CD4-positive, alpha-beta T cell (primary cell): ENCODE measurements at regions of chrX and their contacts with region 1.

Region 1: DNA sequence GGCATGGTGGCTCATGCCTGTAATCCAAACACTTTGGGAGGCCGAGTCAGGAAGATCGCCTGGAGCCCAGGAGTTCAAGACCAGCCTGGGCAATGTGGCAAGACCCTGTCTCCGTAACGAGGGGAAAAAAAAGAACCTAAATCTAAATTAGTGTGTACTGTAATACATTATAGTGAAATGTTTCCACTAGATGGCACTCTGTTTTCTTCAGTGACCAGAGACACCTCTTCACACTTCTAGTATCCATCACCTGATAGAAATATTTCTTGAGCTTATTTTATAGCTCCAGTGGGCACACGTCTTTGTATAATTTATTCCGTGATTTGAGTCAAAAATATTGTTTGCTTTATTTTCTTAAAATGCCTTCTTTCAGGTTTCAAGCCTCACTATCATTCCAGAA is 600.9 kb upstream of the DIPK2B start:
- DNase-seq: peak in 3 of 14 experiments; percentile 59 to 66 (median 64)
- ATAC-seq: peak; percentile 50
- H3K4me3 ChIP-seq: peak overlapping the region; percentile 38
- H3K4me3 Mint-ChIP-seq: peak overlapping the region; percentile 72
- H3K27ac ChIP-seq: no peak overlapping the region
- H3K27ac Mint-ChIP-seq: peak overlapping the region; percentile 83
- H3K4me1 ChIP-seq: peaks cover 28% of the 10 kb centered on the region
- H3K4me1 Mint-ChIP-seq: peaks cover 57% of the 10 kb centered on the region
- H3K27me3 ChIP-seq: no peaks in the 10 kb centered on the region
- H3K27me3 Mint-ChIP-seq: no peaks in the 10 kb centered on the region
- CTCF ChIP-seq: peak; percentile 44

Region 2: GRCh38 chrX:45769761-45770582 is 31.6 kb before region 1 on chrX:
- CTCF ChIA-PET with region 1: interaction called, 6 read pairs
- POLR2A ChIA-PET with region 1: interaction called, 37 read pairs
- intact Hi-C with region 1: loop called in 1 of 2 experiments (anchors 1 kb)
- DNase-seq: peak in 7 of 14 experiments; percentile 6 to 78 (median 18)
- ATAC-seq: peak; percentile 25
- H3K4me3 ChIP-seq: peak overlapping the region; percentile 64
- H3K4me3 Mint-ChIP-seq: peak overlapping the region; percentile 93
- H3K27ac ChIP-seq: peak overlapping the region; percentile 63 to 71
- H3K27ac Mint-ChIP-seq: peak overlapping the region; percentile 97
- H3K4me1 ChIP-seq: peaks cover 32% of the 10 kb centered on the region
- H3K4me1 Mint-ChIP-seq: peaks cover 89% of the 10 kb centered on the region
- H3K27me3 ChIP-seq: no peaks in the 10 kb centered on the region
- H3K27me3 Mint-ChIP-seq: no peaks in the 10 kb centered on the region
- CTCF ChIP-seq: no peak

Region 3: GRCh38 chrX:45843518-45843917 is 42.0 kb after region 1 on chrX:
- CTCF ChIA-PET with region 1: interaction called, 5 read pairs
- POLR2A ChIA-PET with region 1: interaction called, 16 read pairs
- intact Hi-C with region 1: loop called (anchors 2 to 5 kb)
- DNase-seq: peak in 5 of 14 experiments; percentile 6 to 55 (median 45)
- ATAC-seq: peak; percentile 63
- H3K4me3 ChIP-seq: no peak overlapping the region
- H3K4me3 Mint-ChIP-seq: no peak overlapping the region
- H3K27ac ChIP-seq: no peak overlapping the region
- H3K27ac Mint-ChIP-seq: no peak overlapping the region
- H3K4me1 ChIP-seq: peaks cover 8% of the 10 kb centered on the region
- H3K4me1 Mint-ChIP-seq: peaks cover 24% of the 10 kb centered on the region
- H3K27me3 ChIP-seq: no peaks in the 10 kb centered on the region
- H3K27me3 Mint-ChIP-seq: no peaks in the 10 kb centered on the region
- CTCF ChIP-seq: peak; percentile 37

Region 4: GRCh38 chrX:45868425-45868824 is 66.9 kb after region 1 on chrX:
- CTCF ChIA-PET with region 1: no interaction called
- POLR2A ChIA-PET with region 1: no interaction called
- intact Hi-C with region 1: no loop called
- DNase-seq: no peak
- ATAC-seq: no peak
- H3K4me3 ChIP-seq: no peak overlapping the region
- H3K4me3 Mint-ChIP-seq: no peak overlapping the region
- H3K27ac ChIP-seq: no peak overlapping the region
- H3K27ac Mint-ChIP-seq: no peak overlapping the region
- H3K4me1 ChIP-seq: no peaks in the 10 kb centered on the region
- H3K4me1 Mint-ChIP-seq: no peaks in the 10 kb centered on the region
- H3K27me3 ChIP-seq: no peaks in the 10 kb centered on the region
- H3K27me3 Mint-ChIP-seq: no peaks in the 10 kb centered on the region
- CTCF ChIP-seq: no peak

Region 5: DNA sequence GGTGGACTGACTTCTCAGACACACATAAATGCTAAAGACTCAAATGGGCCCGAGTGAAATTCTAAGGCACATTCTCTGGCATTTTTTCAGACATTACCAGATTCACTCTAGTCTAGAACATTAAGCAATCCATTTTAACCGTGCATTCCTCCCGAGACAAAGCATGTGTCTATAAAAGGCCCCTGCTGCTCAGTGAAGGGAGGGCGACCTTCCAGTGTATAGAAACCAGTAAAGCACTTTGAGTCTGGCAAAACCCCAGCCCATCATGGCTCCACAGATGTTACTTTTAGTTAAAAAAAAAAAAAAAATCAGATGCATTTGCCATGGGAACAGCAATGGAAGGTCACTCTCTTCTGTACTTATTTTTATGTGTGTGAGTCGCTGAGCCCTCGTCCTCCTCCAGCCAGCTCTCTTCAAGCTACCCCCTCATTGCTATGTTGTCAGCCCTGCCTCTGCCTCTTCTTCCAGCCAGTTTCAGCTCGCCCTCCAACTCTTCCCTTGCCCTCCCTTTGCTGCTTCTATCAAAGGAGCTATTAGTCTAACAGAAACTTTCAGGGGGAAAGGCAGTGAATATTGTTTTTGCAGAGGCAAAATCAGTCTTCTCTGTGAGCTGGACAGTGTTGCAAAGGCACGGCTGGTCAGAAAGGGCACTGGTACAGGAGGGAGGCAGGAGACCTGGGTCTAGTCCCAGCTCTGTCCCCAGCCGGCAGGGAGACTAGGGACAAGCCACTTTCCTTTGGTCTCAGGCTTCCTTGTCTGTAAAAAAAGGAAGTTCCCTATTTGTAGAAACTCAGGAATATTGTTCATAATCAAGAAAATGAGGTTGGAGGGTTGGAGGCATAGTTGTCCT is 99.4 kb after region 1 on chrX:
- CTCF ChIA-PET with region 1: no interaction called
- POLR2A ChIA-PET with region 1: no interaction called
- intact Hi-C with region 1: no loop called
- DNase-seq: no peak
- ATAC-seq: no peak
- H3K4me3 ChIP-seq: no peak overlapping the region
- H3K4me3 Mint-ChIP-seq: no peak overlapping the region
- H3K27ac ChIP-seq: no peak overlapping the region
- H3K27ac Mint-ChIP-seq: no peak overlapping the region
- H3K4me1 ChIP-seq: no peaks in the 10 kb centered on the region
- H3K4me1 Mint-ChIP-seq: no peaks in the 10 kb centered on the region
- H3K27me3 ChIP-seq: no peaks in the 10 kb centered on the region
- H3K27me3 Mint-ChIP-seq: no peaks in the 10 kb centered on the region
- CTCF ChIP-seq: no peak

Region 6: GRCh38 chrX:46408553-46409407 is 607.2 kb after region 1 on chrX:
- CTCF ChIA-PET with region 1: no interaction called
- POLR2A ChIA-PET with region 1: no interaction called
- intact Hi-C with region 1: loop called in 1 of 2 experiments (anchors 2 kb)
- DNase-seq: peak; percentile 44 to 79 (median 55)
- ATAC-seq: no peak
- H3K4me3 ChIP-seq: no peak overlapping the region
- H3K4me3 Mint-ChIP-seq: no peak overlapping the region
- H3K27ac ChIP-seq: no peak overlapping the region
- H3K27ac Mint-ChIP-seq: no peak overlapping the region
- H3K4me1 ChIP-seq: no peaks in the 10 kb centered on the region
- H3K4me1 Mint-ChIP-seq: peaks cover 5% of the 10 kb centered on the region
- H3K27me3 ChIP-seq: no peaks in the 10 kb centered on the region
- H3K27me3 Mint-ChIP-seq: no peaks in the 10 kb centered on the region
- CTCF ChIP-seq: peak; percentile 73